ENCODE measurements at regions of chr4 and their contacts with region 1.

Region 1: GRCh38 chr4:78551479-78552351 is at the start of gene ANXA3:
- DNase-seq: peak; percentile 77
- H3K4me3 Mint-ChIP-seq: peak within 1 kb of the TSS; percentile 86
- H3K27ac Mint-ChIP-seq: peak within 1 kb of the TSS; percentile 96
- H3K4me1 Mint-ChIP-seq: peaks cover 28% of the 10 kb centered on the region
- H3K27me3 Mint-ChIP-seq: no peaks in the 10 kb centered on the region
- CTCF ChIP-seq: no peak
- total RNA-seq, gene ANXA3: 158 and 188 TPM in 2 replicates

Region 2: DNA sequence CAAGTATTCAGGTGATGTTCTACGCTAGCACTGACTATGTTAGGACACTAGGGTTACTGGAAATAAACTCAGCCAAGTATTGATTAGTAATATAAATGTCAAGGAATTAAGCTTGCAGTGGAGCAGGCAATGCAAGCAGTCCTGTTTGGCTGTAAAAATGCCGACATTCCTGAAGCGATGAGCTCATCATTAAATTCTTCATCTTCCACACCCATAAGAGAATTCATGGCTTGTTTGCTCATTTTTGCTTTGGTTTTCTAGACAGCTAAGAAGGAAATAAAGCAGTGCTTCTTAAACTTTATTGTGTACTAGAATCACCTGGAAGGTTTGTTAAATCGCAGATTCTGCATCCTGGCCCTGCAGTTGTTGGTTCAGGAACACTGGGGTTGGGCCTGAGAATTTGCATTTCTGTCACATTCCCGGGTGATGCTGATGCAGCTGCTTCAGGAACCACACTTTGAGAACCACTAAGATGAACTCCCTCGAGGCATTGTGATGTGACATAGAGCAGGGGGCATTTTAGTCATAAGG is 17.6 kb after region 1 on chr4:
- CTCF ChIA-PET with region 1: interaction called, 3 read pairs
- intact Hi-C with region 1: loop called (anchors 1 kb)
- DNase-seq: peak; percentile 51
- H3K4me3 Mint-ChIP-seq: peak overlapping the region; percentile 2
- H3K27ac Mint-ChIP-seq: peak overlapping the region; percentile 99
- H3K4me1 Mint-ChIP-seq: peaks cover 42% of the 10 kb centered on the region
- H3K27me3 Mint-ChIP-seq: no peaks in the 10 kb centered on the region
- CTCF ChIP-seq: no peak

Region 3: GRCh38 chr4:78829296-78829695 is 277.6 kb after region 1 on chr4:
- CTCF ChIA-PET with region 1: no interaction called
- intact Hi-C with region 1: no loop called
- DNase-seq: no peak
- H3K4me3 Mint-ChIP-seq: no peak overlapping the region
- H3K27ac Mint-ChIP-seq: no peak overlapping the region
- H3K4me1 Mint-ChIP-seq: no peaks in the 10 kb centered on the region
- H3K27me3 Mint-ChIP-seq: no peaks in the 10 kb centered on the region
- CTCF ChIP-seq: no peak

Region 4: GRCh38 chr4:79083406-79084010 is 531.8 kb after region 1 on chr4:
- CTCF ChIA-PET with region 1: no interaction called
- intact Hi-C with region 1: no loop called
- DNase-seq: no peak
- H3K4me3 Mint-ChIP-seq: no peak overlapping the region
- H3K27ac Mint-ChIP-seq: no peak overlapping the region
- H3K4me1 Mint-ChIP-seq: no peaks in the 10 kb centered on the region
- H3K27me3 Mint-ChIP-seq: no peaks in the 10 kb centered on the region
- CTCF ChIP-seq: no peak